ENCODE measurements at regions of chr14 and their contacts with region 1.

Region 1: GRCh38 chr14:38721822-38722431 is 381.1 kb downstream of the SEC23A start:
- DNase-seq: peak in 1 of 2 donors; percentile 51
- H3K4me3 ChIP-seq: no peak overlapping the region
- CTCF ChIP-seq: peak in 1 of 3 donors; percentile 56
- POLR2A ChIP-seq: no peak

Region 2: GRCh38 chr14:38867561-38868150 is 145.7 kb after region 1 on chr14:
- intact Hi-C with region 1: loop called (anchors 10 kb)
- DNase-seq: peak in 1 of 2 donors; percentile 70
- H3K4me3 ChIP-seq: no peak overlapping the region
- CTCF ChIP-seq: no peak
- POLR2A ChIP-seq: no peak

Region 3: DNA sequence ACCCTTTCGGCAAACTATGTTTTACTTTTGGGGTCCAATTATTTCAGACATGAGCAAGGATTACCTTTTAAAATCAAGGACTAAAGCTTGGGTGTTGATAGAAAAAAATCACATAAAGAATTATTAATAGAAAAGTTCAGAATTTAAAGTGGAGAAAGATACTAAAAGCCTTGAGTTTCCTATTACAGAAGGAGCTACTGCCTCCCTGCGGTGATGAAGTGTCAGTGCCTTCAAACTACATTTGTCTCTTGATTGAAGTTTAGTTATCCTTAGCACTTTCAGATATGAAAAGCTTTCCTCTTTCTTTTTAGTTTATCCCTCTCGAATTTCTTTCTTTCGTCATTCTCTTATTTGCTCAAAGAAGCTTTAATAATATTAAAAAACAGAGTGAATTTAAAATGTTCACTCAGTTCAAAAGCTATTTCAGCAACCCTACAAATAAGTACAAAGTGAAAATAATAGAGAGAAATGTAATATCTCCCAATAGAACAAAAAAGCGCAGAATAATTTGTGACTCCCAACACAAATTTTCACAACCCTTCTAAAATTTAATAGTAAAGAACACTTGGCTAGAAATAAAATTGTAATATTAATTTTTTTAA is 293.5 kb after region 1 on chr14:
- intact Hi-C with region 1: loop called (anchors 10 kb)
- DNase-seq: no peak
- H3K4me3 ChIP-seq: no peak overlapping the region
- CTCF ChIP-seq: peak in 1 of 3 donors; percentile 26
- POLR2A ChIP-seq: no peak